PC-9 (cell line): ENCODE measurements at regions of chr1 and their contacts with region 1.

Region 1: GRCh38 chr1:44674113-44675000 is at the starts of genes ARMH1 and TMEM53:
- DNase-seq: peak; percentile 98 to 100
- H3K4me3 ChIP-seq: peak within 1 kb of the TSS; percentile 81
- H3K27ac ChIP-seq: peak within 1 kb of the TSS; percentile 89
- H3K4me1 ChIP-seq: peaks cover 54% of the 10 kb centered on the region
- H3K27me3 ChIP-seq: no peaks in the 10 kb centered on the region
- CTCF ChIP-seq: no peak
- total RNA-seq, gene ARMH1: 16.3 and 16.9 TPM in 2 replicates
- total RNA-seq, gene TMEM53: 33.2 and 36.1 TPM in 2 replicates

Region 2: GRCh38 chr1:44084998-44085675 is 589.2 kb before region 1 on chr1:
- CTCF ChIA-PET with region 1: interaction called, 18 read pairs
- POLR2A ChIA-PET with region 1: no interaction called
- intact Hi-C with region 1: no loop called
- DNase-seq: peak; percentile 26 to 79
- H3K4me3 ChIP-seq: no peak overlapping the region
- H3K27ac ChIP-seq: no peak overlapping the region
- H3K4me1 ChIP-seq: peaks cover 7% of the 10 kb centered on the region; the same call in 1 of the 2 replicates
- H3K27me3 ChIP-seq: no peaks in the 10 kb centered on the region
- CTCF ChIP-seq: no peak

Region 3: DNA sequence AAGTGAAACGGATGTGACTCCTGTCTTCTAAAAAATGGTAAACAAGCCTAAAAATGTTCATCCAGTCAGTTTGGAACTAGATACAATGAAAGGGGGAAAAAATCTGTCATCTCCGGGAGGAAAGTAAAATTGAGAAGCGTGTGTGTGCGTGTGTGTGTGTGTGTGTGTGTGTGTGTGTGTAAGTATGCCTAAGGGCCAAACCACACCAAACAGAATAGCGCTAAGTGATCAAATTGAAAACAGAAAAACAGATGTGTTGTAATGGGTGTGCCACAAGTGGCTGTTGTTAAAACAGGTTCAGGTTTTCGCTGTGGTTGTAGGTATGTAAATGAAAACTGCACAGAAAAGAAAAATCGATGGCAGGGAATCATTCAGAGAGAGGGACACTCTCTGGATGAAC is 162.6 kb before region 1 on chr1:
- CTCF ChIA-PET with region 1: no interaction called
- POLR2A ChIA-PET with region 1: no interaction called
- intact Hi-C with region 1: no loop called
- DNase-seq: no peak
- H3K4me3 ChIP-seq: no peak overlapping the region
- H3K27ac ChIP-seq: no peak overlapping the region
- H3K4me1 ChIP-seq: peaks cover 19% of the 10 kb centered on the region
- H3K27me3 ChIP-seq: no peaks in the 10 kb centered on the region
- CTCF ChIP-seq: no peak

Region 4: GRCh38 chr1:44631647-44632539 is 42.5 kb before region 1 on chr1:
- CTCF ChIA-PET with region 1: interaction called, 4 read pairs
- POLR2A ChIA-PET with region 1: interaction called, 6 read pairs
- intact Hi-C with region 1: loop called (anchors 2 kb)
- DNase-seq: peak; percentile 76 to 90
- H3K4me3 ChIP-seq: peak overlapping the region; percentile 74
- H3K27ac ChIP-seq: peak overlapping the region; percentile 97
- H3K4me1 ChIP-seq: peaks cover 44% of the 10 kb centered on the region
- H3K27me3 ChIP-seq: no peaks in the 10 kb centered on the region
- CTCF ChIP-seq: no peak

Region 5: DNA sequence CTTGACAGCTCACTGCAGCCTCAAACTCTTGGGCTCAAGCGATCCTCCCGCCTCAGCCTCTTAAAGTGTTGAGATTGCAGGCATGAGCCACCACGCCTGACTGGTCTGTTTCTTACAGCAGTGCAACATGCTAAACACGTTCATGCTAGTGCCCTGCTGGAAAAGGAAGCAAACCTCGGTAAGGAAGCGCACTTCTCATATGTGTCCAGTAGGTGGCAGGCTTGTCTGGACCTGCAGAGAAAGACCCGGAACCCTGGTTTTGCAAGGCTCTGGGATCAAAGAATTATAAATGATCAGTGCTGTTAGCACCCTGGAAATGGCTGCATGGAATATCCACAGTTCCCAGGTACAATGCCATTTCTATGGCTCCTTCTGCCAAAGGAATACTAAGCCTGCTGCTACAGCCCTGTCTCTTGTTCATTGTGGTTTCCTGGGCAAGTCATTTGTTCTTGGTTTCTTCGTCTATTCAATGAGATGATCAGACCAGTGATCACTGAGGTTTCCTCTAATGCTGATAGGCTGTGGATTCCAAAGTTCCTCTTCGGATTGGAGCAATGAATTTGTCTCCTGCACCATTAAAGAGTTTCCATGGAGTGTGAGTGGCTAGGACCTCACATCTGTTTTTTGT is 40.7 kb after region 1 on chr1:
- CTCF ChIA-PET with region 1: no interaction called
- POLR2A ChIA-PET with region 1: interaction called, 7 read pairs
- intact Hi-C with region 1: loop called (anchors 1 kb)
- DNase-seq: peak; percentile 64 to 69
- H3K4me3 ChIP-seq: no peak overlapping the region
- H3K27ac ChIP-seq: no peak overlapping the region
- H3K4me1 ChIP-seq: peaks cover 21% of the 10 kb centered on the region
- H3K27me3 ChIP-seq: no peaks in the 10 kb centered on the region
- CTCF ChIP-seq: peak; percentile 91

Region 6: DNA sequence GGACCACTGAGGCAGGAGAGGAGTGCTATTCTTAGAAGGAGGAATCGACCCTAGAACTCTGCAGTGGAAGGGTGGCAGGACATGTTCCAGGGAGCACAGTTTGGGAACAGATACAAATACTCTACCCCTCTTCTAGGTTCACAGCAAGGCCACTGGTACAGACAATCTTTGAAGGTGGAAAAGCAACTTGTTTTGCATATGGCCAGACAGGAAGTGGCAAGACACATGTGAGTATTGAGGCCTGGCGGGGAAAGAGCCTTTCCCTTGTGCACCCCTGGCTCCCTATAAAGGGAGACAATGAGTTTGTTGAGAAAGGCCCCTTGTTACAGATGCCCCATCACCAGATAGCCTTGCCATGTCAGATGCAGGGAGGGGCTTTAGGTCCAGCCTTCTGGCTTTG is 83.1 kb after region 1 on chr1:
- CTCF ChIA-PET with region 1: no interaction called
- POLR2A ChIA-PET with region 1: no interaction called
- intact Hi-C with region 1: no loop called
- DNase-seq: no peak
- H3K4me3 ChIP-seq: no peak overlapping the region
- H3K27ac ChIP-seq: no peak overlapping the region
- H3K4me1 ChIP-seq: no peaks in the 10 kb centered on the region
- H3K27me3 ChIP-seq: no peaks in the 10 kb centered on the region
- CTCF ChIP-seq: no peak

Region 7: DNA sequence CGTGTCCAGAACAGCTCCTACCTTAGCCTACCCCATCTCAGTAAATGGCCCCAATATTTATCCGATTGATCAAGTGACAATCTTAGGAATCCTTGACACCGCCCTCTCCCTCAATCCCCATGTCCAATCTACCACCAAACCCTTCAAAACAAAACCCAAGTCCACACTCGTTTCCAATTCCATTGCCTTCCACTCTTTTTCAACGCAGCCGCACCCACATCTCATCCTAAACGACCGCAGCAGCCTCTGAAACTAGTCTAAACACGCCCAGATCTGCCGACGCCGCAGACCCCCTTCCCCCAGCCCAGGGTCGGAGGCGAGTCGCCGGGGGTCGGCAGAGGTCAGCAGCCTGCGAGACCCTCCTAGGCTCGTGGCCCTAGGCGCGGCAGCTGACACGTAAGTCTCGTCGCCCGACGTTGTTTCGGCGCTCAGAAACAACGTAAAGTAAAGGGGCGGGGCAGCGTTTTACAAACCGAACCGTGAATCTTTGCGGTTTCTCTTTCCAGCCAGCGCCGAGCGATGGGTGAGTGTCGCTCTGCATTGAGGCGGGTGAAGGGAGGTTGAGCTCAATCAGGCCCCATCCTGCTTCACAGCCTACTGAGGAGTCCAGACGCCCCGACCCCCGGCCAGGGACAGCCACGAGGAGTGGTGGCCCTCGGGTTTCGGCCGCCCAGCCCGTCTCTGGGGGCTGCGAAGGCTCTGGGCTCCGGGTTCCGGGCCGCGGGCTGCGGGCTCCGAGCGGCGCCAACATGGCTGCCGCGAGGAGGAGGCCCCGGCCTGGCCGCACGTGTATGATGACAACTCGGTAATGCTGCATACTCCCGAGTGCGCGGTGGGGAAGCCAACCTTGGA is 100.9 kb after region 1 on chr1 and contains the start of gene RPS8:
- CTCF ChIA-PET with region 1: no interaction called
- POLR2A ChIA-PET with region 1: interaction called, 15 read pairs
- intact Hi-C with region 1: no loop called
- DNase-seq: peak; percentile 86 to 87
- H3K4me3 ChIP-seq: peak within 1 kb of the TSS; percentile 95
- H3K27ac ChIP-seq: peak within 1 kb of the TSS; percentile 98
- H3K4me1 ChIP-seq: peaks cover 22% of the 10 kb centered on the region
- H3K27me3 ChIP-seq: no peaks in the 10 kb centered on the region
- CTCF ChIP-seq: 0 out of 2 replicates have a peak, but pooled peaks have one; percentile 10
- total RNA-seq, gene RPS8: 2,059 and 2,176 TPM in 2 replicates

Region 8: GRCh38 chr1:45430490-45430889 is 756.1 kb after region 1 on chr1:
- CTCF ChIA-PET with region 1: no interaction called
- POLR2A ChIA-PET with region 1: no interaction called
- intact Hi-C with region 1: no loop called
- DNase-seq: no peak
- H3K4me3 ChIP-seq: no peak overlapping the region
- H3K27ac ChIP-seq: no peak overlapping the region
- H3K4me1 ChIP-seq: no peaks in the 10 kb centered on the region
- H3K27me3 ChIP-seq: no peaks in the 10 kb centered on the region
- CTCF ChIP-seq: no peak